Activated CD8-positive, alpha-beta memory T cell treated with anti-CD3 and anti-CD28 coated beads, Interleukin-2, amount 10 ng/mL, durations not matched to agents 7 days and 5 days (primary cell): ENCODE measurements at regions of chr3 and their contacts with region 1.

Region 1: GRCh38 chr3:152511904-152512303 is 243.2 kb downstream of the MBNL1 start:
- DNase-seq: no peak
- ATAC-seq: no peak
- H3K4me3 Mint-ChIP-seq: no peak overlapping the region
- H3K27ac Mint-ChIP-seq: no peak overlapping the region
- H3K4me1 Mint-ChIP-seq: peaks cover 14% of the 10 kb centered on the region
- H3K27me3 Mint-ChIP-seq: peaks cover 13% of the 10 kb centered on the region

Region 2: DNA sequence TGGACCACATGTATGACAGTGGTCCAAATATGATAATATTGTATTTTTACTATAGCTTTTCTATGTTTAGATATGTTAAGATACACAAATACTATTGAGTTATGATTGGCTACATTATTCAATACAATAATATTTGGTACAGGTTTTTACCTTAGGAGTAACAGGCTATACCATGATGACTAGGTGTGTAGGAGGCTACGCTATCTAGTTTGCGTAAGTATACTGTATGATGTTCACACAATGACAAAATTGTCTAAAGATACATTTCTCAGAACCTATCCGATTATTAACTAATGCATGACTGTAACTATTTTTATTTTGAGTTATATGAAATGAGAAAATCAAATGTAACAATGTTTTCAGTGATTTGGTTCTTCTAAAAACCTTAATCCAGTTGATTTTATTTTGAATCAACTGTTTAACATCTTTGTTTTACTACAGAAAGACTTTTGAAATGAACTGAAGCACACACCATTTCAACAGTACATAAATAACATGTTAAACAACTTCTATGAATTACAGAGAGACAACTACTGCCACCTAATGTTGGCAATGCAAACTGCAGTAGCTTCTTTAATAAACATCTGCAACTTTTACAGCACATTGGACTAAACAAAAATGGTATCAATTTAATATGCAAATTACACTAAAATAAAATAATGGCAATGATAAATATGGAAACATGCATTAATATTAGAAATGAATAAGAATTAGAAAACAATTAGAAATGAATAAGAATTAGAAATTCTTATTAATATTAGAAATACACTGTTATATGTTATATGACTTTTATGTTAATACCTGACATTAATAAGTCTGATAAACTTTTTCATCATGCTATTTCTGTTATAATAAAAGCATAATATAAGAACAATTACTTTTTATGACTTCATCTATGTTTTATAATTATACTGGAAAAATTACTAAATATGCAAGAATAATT is 12.6 kb after region 1 on chr3:
- CTCF ChIA-PET with region 1: interaction called, 19 read pairs
- DNase-seq: peak; percentile 60
- ATAC-seq: no peak
- H3K4me3 Mint-ChIP-seq: no peak overlapping the region
- H3K27ac Mint-ChIP-seq: no peak overlapping the region
- H3K4me1 Mint-ChIP-seq: no peaks in the 10 kb centered on the region
- H3K27me3 Mint-ChIP-seq: peaks cover 3% of the 10 kb centered on the region

Region 3: GRCh38 chr3:152638707-152639450 is 127.0 kb after region 1 on chr3:
- CTCF ChIA-PET with region 1: no interaction called
- DNase-seq: no peak
- ATAC-seq: no peak
- H3K4me3 Mint-ChIP-seq: no peak overlapping the region
- H3K27ac Mint-ChIP-seq: no peak overlapping the region
- H3K4me1 Mint-ChIP-seq: no peaks in the 10 kb centered on the region
- H3K27me3 Mint-ChIP-seq: peaks cover 9% of the 10 kb centered on the region

Region 4: DNA sequence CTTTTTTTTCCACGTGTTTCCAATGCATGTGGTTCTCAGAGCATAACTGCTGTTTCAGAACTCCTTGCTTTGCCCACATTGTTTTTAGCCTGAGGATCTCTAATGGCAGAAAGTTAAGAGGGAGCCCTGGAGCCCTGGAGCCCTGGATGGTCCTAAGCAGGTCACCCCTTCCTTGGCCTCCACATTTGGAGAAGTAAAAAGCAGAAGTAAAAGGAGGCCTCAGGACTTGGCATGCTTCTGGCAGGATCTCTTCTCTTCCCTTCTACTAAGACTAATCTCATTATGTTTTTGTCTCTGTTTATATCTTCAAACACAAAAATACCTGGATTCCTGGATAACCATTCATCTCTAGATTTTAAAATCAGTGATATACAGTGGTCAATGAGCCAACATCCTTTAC is 373.2 kb after region 1 on chr3:
- CTCF ChIA-PET with region 1: no interaction called
- DNase-seq: no peak
- ATAC-seq: no peak
- H3K4me3 Mint-ChIP-seq: no peak overlapping the region
- H3K27ac Mint-ChIP-seq: no peak overlapping the region
- H3K4me1 Mint-ChIP-seq: no peaks in the 10 kb centered on the region
- H3K27me3 Mint-ChIP-seq: no peaks in the 10 kb centered on the region